ENCODE measurements at regions of chr1 and their contacts with region 1.

Region 1: DNA sequence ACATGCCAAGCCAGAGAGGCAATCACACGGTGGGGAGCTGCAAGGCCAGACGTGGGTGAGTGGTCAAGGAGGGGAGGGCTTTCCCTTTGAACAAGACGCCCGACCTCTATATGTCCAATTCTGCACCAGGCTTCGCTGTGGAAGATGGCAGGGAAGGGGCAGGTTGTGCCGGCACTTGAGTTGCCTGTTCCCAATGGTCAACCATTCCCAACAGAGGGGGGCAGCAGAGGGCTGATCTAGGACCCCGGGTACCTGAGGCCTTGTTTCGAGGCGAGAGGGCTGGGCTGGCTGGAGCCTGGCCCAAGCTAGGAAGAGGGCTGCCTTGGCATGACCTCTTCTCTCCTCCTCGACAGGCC is 64.9 kb downstream of the TMEM53 start:
- DNase-seq: peak; percentile 48 to 68 (median 66)
- H3K4me3 ChIP-seq: no peak overlapping the region
- H3K27ac ChIP-seq: no peak overlapping the region
- H3K4me1 ChIP-seq: no peaks in the 10 kb centered on the region
- H3K27me3 ChIP-seq: no peaks in the 10 kb centered on the region
- CTCF ChIP-seq: peak in 2 of 3 donors; percentile 37 to 43
- EP300 ChIP-seq: no peak
- POLR2A ChIP-seq: no peak

Region 2: DNA sequence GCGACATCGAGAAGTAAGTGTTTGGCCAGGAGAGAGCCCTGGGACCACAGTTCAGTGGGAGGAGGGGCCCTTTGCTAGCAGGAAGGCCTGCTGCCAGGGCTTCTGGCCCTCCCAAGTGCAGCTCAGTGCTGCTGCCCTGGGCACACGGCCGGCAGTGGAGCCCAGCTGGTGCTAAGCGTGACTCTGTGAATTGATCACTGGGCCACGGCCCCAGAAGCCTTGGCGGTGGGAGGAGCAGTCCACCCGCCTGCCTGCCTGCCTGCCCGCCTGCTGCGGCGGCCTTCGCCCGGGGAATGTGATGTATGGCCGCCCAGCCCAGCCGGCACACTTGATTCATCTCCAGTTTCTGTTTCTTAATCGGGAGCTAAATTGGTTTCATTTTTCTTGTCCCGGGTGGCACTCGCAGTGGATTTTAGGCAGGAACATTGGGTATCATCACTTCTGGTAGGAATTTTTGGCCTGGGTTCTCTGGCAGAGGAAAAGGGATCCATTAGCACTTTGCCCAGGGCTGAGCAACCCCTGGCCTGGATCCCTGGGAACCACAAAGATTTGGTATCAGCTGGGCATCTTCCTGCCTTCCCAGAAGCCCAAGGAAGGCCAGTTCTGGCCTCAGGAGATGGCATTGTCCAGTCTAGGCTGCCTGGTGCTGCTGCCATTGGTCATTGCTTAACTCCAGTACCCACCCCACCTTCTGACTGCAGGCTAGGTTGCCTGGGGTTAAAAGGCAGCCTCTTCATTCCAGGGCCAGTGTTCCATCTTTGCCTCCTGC is 36.3 kb after region 1 on chr1:
- intact Hi-C with region 1: loop called in 3 of 4 experiments (anchors 5 kb)
- DNase-seq: peak; percentile 32 to 63 (median 60)
- H3K4me3 ChIP-seq: no peak overlapping the region
- H3K27ac ChIP-seq: peak overlapping the region in 1 of 2 donors; percentile 37
- H3K4me1 ChIP-seq: peaks cover 6% of the 10 kb centered on the region
- H3K27me3 ChIP-seq: no peaks in the 10 kb centered on the region
- CTCF ChIP-seq: no peak
- EP300 ChIP-seq: no peak
- POLR2A ChIP-seq: no peak

Region 3: GRCh38 chr1:44652445-44653106 is 43.2 kb after region 1 on chr1:
- intact Hi-C with region 1: loop called in 3 of 4 experiments (anchors 5 kb)
- DNase-seq: peak; percentile 63 to 87 (median 82)
- H3K4me3 ChIP-seq: no peak overlapping the region
- H3K27ac ChIP-seq: no peak overlapping the region
- H3K4me1 ChIP-seq: no peaks in the 10 kb centered on the region
- H3K27me3 ChIP-seq: no peaks in the 10 kb centered on the region
- CTCF ChIP-seq: peak; percentile 59 to 91 (median 84)
- EP300 ChIP-seq: no peak
- POLR2A ChIP-seq: no peak